Endothelial cell of umbilical vein (primary cell): ENCODE measurements at regions of chrX and their contacts with region 1.

Region 1: GRCh38 chrX:2608638-2609430 is 82.3 kb upstream of the CD99 start:
- DNase-seq: peak; percentile 82
- H3K4me3 ChIP-seq: peak overlapping the region; percentile 46 to 98 (median 65)
- H3K27ac ChIP-seq: peak overlapping the region; percentile 20
- H3K4me1 ChIP-seq: peaks cover 22% of the 10 kb centered on the region
- H3K27me3 ChIP-seq: no peaks in the 10 kb centered on the region
- CTCF ChIP-seq: no peak
- POLR2A ChIP-seq: peak; percentile 70

Region 2: DNA sequence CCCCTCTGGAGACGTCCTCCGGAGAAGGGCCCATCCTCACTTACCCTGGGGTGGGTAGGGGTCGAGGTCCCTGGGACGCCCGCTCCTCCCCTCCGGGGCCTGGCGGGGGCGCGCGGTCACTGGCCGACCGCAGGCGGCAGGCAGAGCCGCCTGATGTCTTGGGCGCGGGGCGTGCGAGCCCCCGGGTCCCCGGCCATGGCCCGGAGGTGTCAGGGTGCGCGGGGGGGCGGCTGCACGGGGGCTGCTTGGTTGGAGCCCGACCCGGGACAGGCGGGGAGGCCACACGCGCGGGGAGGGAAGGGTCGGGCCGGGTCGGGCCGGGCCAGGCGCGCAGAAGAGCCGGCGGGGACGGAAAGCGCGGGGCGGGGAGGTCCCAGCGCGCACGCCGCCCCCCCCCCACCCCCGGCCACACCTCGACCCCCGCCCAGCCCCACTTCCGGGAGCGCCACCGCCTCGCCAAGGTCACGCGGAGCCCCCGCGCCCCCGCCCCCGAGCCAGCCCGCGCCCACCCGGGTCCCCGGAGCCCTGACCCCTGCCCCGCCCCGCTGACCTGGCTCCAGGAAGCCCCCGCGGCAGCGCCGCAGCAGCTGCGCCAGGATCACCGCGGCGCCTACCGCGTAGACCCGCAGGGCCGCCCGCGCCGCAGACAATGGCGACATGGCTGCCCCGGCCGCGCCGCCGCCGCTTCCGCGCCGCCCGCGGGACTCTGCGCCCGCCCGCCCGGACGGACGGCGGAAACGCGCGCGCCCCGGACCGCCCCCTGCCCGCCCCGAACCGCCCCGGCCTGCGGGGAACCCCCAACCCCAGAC is 108.4 kb before region 1 on chrX and contains the starts of genes DHRSX and ZBED1:
- CTCF ChIA-PET with region 1: no interaction called
- POLR2A ChIA-PET with region 1: no interaction called
- dilution Hi-C with region 1: no loop called
- intact Hi-C with region 1: loop called (anchors 1 kb)
- DNase-seq: peak; percentile 49
- H3K4me3 ChIP-seq: peak within 1 kb of the TSS; percentile 83 to 93 (median 84)
- H3K27ac ChIP-seq: peak within 1 kb of the TSS; percentile 54
- H3K4me1 ChIP-seq: peaks cover 13% of the 10 kb centered on the region
- H3K27me3 ChIP-seq: no peaks in the 10 kb centered on the region
- CTCF ChIP-seq: peak in 1 of 2 donors; percentile 33
- POLR2A ChIP-seq: peak; percentile 77
- total RNA-seq, gene DHRSX: 27.1 and 29.3 TPM in 2 replicates
- total RNA-seq, gene ZBED1: 43.7 and 46.5 TPM in 2 replicates

Region 3: GRCh38 chrX:2584251-2585157 is 24.3 kb before region 1 on chrX:
- CTCF ChIA-PET with region 1: no interaction called
- POLR2A ChIA-PET with region 1: no interaction called
- dilution Hi-C with region 1: no loop called
- intact Hi-C with region 1: no loop called
- DNase-seq: no peak
- H3K4me3 ChIP-seq: no peak overlapping the region
- H3K27ac ChIP-seq: no peak overlapping the region
- H3K4me1 ChIP-seq: no peaks in the 10 kb centered on the region
- H3K27me3 ChIP-seq: peaks cover 32 to 40% of the 10 kb centered on the region in 2 experiments
- CTCF ChIP-seq: no peak
- POLR2A ChIP-seq: no peak

Region 4: DNA sequence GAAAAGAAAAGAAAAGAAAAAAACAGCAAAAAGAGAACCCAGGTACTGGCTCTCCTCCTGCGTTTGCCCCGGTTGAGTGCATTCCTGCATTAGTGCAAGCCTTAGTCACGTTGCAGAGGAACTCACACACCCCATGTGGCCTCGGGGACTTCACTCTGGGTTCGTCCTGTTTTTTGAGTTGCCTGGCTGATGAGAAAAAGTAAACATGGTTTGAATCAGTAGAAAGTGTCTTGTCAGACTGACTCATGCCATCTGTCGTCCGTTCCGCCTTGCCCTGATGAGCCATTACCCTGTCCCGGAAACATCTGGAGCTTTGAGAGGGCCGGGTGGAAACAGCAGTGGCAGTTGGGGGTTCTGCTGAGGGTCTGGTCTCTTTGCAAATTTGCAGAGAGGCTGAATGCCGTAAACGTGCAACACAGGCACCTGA is 98.5 kb after region 1 on chrX:
- CTCF ChIA-PET with region 1: no interaction called
- POLR2A ChIA-PET with region 1: no interaction called
- dilution Hi-C with region 1: no loop called
- intact Hi-C with region 1: loop called (anchors 1 kb)
- DNase-seq: peak; percentile 60
- H3K4me3 ChIP-seq: no peak overlapping the region
- H3K27ac ChIP-seq: peak overlapping the region; percentile 76
- H3K4me1 ChIP-seq: peaks cover 74% of the 10 kb centered on the region
- H3K27me3 ChIP-seq: no peaks in the 10 kb centered on the region
- CTCF ChIP-seq: no peak
- POLR2A ChIP-seq: no peak